ENCODE measurements at regions of chr22 and their contacts with region 1.

Region 1: DNA sequence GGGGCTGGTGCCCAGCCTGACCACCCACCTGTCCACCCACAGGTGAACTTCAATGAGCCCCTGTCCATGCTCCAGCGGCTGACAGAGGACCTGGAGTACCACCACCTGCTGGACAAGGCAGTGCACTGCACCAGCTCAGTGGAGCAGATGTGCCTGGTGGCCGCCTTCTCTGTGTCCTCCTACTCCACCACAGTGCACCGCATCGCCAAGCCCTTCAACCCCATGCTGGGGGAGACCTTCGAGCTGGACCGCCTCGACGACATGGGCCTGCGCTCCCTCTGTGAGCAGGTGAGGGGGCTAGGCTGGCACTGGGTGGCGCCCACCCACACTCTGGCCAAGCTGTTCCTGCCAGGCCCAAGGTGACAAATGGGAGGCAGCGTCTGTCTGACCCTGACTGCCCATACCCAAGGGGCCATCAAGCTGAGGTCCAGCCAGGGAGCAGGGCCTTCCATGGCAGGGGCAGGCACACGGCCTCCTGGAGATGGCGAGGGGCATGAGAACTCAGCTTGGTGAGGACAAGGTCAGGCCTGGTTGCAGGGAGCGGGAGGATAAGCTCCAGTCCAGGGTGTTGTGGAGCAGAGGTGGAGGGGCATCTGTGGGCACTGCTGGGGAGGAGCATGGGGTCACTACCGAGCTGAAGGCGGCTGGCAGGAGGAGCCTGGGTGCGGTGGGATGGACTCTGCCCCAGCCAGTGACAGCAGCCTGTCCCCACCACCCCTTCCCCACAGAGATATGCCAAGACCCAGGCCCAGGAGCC is 77.7 kb downstream of the MORC2 start:
- DNase-seq: peak in 3 of 5 donors; percentile 28 to 63 (median 38)
- ATAC-seq: peak in 3 of 4 donors; percentile 50 to 52 (median 50)
- H3K4me3 ChIP-seq: no peak overlapping the region
- H3K27ac ChIP-seq: no peak overlapping the region
- H3K4me1 ChIP-seq: peaks cover 0 to 6% (median 0%) of the 10 kb centered on the region in 12 donors
- H3K27me3 ChIP-seq: no peaks in the 10 kb centered on the region
- CTCF ChIP-seq: peak; percentile 57 to 78 (median 68)
- POLR2A ChIP-seq: no peak

Region 2: DNA sequence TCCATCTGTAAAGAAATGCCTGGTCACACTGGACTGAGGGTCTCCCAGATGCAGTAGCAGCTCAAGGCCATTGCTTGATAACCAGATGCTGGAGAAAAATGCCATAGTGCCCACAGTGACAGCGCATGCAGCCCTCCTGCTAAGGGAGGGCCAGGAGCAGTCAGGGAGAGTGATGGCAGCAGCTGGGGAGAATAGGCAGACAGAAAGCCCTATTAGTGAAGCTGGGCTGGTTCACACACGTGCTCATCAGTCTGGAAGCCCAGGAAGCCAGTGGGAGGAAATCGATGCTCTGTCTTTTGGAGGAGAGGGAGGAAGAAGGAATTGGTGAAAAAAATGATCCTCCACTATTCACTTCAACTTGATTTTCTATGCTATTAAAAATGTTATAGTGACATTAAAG is 113.3 kb before region 1 on chr22:
- intact Hi-C with region 1: loop called in 2 of 10 experiments (anchors 10 kb)
- DNase-seq: no peak
- ATAC-seq: no peak
- H3K4me3 ChIP-seq: no peak overlapping the region
- H3K27ac ChIP-seq: no peak overlapping the region
- H3K4me1 ChIP-seq: peaks cover 0 to 5% (median 0%) of the 10 kb centered on the region in 12 donors
- H3K27me3 ChIP-seq: no peaks in the 10 kb centered on the region
- CTCF ChIP-seq: no peak
- POLR2A ChIP-seq: no peak

Region 3: DNA sequence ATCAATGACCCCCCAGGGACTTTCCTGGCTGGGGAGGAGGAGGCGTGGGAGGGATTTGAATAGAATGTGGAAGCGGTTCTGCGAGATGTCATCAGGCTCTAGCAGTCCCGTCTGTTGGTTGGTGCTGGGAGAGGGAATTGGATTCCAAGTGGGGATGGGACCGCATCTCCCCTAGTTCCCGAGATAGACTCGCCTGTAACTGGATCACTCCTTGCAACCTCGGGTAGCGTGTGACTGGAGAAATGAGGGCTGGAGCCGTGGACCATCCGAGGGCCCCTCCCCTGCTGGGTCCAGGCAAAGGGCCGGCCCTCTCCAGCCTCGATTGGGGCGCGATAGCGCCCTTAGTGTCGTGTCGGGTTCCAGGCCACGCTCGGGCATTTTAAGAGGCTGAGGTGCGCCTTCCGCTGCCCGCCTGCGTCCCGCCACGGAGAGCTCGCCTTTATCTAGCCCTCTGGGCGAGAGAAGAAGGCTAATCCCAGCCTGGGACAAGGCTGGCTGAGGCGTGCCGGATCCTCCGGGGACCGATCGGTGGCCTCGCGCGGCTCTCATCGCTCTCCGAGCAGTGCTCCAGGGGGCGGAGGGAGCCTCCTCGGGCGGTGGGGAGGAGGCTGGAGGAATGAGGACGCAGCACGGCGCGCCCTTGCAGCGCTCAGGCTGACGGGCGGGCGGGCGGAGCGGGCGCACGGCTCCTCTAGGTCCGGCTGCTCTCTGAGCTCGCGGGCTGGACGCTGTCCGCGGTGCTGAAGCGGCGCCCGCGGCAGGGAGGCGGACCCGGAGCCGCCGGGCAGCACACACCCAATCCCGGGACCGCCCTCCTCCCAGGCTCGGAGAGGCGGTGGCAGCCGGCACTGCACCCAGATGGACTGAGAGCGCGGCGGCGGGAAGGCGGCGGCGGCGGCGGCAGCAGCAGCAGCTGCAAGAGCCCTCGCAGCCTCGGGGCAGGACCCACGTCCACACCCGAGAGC is 88.4 kb before region 1 on chr22:
- intact Hi-C with region 1: loop called in 1 of 10 experiments (anchors 10 kb)
- DNase-seq: peak; percentile 83 to 90 (median 89)
- ATAC-seq: peak; percentile 96 to 100 (median 100)
- H3K4me3 ChIP-seq: peak overlapping the region in 9 of 12 donors; percentile 21 to 44 (median 29)
- H3K27ac ChIP-seq: no peak overlapping the region
- H3K4me1 ChIP-seq: peaks cover 0 to 17% (median 13%) of the 10 kb centered on the region in 12 donors
- H3K27me3 ChIP-seq: peaks cover 0 to 37% (median 0%) of the 10 kb centered on the region in 9 donors
- CTCF ChIP-seq: peak in 8 of 12 donors; percentile 17 to 66 (median 46)
- POLR2A ChIP-seq: peak in 1 of 2 donors; percentile 24

Region 4: DNA sequence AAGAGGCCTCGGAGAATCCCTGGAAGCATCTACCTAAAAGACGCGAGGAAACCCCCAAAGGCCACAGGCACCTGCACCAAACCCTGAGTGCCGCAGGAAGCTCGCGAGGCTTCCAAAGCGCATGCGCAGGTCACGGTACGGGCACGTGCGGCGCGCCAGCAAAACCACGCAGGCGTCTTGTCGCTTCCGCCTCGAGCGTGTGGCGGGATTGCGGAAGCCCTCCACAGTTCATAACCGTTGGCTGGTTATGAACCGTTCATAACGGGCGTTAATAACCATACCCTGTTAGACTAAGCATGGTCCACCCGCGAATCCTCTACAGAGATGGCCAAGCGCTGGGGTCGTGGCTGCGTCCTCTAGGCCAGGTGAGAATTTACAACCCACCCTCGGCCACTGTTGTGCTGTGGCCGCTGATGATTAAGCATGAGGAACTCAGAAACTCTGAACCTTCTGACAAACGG is 31.3 kb after region 1 on chr22:
- intact Hi-C with region 1: no loop called
- DNase-seq: peak; percentile 57 to 92 (median 69)
- ATAC-seq: peak; percentile 39 to 74 (median 66)
- H3K4me3 ChIP-seq: peak overlapping the region in 11 of 12 donors; percentile 17 to 60 (median 50)
- H3K27ac ChIP-seq: peak overlapping the region in 4 of 12 donors; percentile 34 to 63 (median 48)
- H3K4me1 ChIP-seq: peaks cover 0 to 24% (median 7%) of the 10 kb centered on the region in 12 donors
- H3K27me3 ChIP-seq: no peaks in the 10 kb centered on the region
- CTCF ChIP-seq: no peak
- POLR2A ChIP-seq: no peak

Measured in heart left ventricle (tissue), 16 donors.